MCF 10A (cell line): ENCODE measurements at regions of chr4 and their contacts with region 1.

Region 1: DNA sequence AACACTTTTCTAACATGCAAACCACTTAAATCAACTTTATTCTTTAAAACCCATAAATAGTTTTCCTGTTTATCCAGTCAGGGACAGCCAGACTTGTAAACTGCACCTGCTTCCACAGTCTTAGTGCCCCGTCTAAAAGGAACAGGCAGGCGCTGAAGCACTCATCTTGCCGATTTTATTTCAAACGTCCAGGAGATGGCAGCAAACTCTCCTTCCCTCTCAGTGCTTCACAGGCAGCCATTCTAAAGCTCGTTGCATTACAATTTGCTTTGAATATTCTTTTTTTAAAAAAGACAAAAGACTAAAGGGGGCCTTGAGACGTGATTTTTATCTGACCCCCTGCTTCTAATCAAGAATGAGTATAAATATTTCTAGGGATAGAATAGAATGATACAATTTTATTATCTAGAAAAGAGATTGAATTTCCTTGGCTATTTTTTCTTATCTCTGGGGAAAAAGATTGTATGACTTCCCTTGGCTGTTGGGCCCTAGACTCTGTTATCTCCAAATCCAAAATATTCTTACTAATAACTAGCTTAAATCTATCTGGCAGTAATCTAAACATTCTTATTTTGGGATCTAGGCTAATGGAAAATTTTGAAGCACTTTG is 93.6 kb upstream of the MYOZ2 start:
- DNase-seq: peak; percentile 86
- H3K4me3 Mint-ChIP-seq: no peak overlapping the region
- H3K27ac Mint-ChIP-seq: no peak overlapping the region
- H3K4me1 Mint-ChIP-seq: peaks cover 7% of the 10 kb centered on the region
- H3K27me3 Mint-ChIP-seq: no peaks in the 10 kb centered on the region
- CTCF ChIP-seq: peak; percentile 63

Region 2: DNA sequence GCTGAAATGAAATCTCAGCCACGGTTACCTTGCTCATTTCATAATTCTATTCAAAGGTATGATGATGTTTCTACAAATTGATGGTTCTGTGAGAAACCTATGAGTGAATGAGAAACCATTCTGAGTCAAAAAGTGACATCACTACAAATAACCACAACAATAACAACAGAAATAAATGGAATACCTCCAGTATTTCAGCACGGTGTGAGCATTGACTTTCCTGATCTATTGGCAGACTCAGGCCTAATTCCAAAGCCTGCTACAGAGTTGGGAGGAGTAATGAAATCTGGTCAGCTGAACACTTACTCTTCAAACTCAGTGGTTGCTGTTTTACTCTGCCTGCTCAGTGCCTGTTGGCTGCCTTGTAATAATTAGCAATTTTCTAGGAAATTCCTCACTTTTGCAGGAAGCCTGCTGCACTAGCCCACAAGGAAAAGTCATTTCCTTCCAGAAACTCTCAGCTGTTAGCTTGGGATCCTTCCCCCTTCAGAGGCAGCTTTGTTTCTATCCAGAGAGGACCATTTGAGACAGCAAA is 172.2 kb before region 1 on chr4:
- CTCF ChIA-PET with region 1: no interaction called
- POLR2A ChIA-PET with region 1: no interaction called
- intact Hi-C with region 1: no loop called
- DNase-seq: no peak
- H3K4me3 Mint-ChIP-seq: no peak overlapping the region
- H3K27ac Mint-ChIP-seq: no peak overlapping the region
- H3K4me1 Mint-ChIP-seq: no peaks in the 10 kb centered on the region
- H3K27me3 Mint-ChIP-seq: no peaks in the 10 kb centered on the region
- CTCF ChIP-seq: no peak

Region 3: GRCh38 chr4:118989098-118990080 is 52.7 kb before region 1 on chr4:
- CTCF ChIA-PET with region 1: interaction called, 93 read pairs
- POLR2A ChIA-PET with region 1: interaction called, 19 read pairs
- intact Hi-C with region 1: no loop called
- DNase-seq: peak; percentile 91
- H3K4me3 Mint-ChIP-seq: peak overlapping the region; percentile 23
- H3K27ac Mint-ChIP-seq: peak overlapping the region; percentile 96
- H3K4me1 Mint-ChIP-seq: peaks cover 25% of the 10 kb centered on the region
- H3K27me3 Mint-ChIP-seq: no peaks in the 10 kb centered on the region
- CTCF ChIP-seq: no peak

Region 4: DNA sequence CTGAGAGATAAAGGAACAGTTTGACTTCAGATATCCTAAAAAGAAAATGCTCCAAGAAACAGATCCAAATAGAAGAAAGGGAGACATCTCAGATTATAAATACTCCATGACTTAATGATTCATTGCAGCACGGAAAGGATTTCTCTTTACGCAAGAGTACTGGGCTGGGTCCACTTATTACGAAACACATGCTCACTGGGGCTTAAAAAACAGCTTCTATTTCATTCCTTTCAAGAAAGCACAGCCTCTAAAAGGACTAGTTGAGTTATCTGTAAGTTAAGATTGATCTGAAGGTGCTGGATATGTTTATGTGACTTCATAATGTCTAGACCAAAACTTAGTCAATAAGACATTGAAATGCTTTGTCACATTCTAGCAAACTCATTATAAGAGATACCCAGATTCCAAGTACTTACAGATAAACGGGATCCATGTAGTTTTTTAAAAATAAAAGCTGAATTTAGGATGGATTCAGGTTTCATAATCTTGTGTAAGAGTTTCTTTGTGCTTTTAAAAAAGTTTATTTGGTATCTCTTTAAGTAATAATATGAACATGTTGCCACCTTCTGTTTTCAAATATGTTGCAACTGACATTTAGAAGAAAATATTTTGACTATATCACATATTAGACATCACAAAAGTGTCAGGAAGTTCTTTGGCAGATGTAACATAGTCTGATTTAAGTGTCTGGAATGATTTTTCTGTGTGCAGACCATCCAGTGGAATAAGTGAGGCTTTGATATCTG is 16.0 kb before region 1 on chr4:
- CTCF ChIA-PET with region 1: interaction called, 32 read pairs
- POLR2A ChIA-PET with region 1: interaction called, 19 read pairs
- intact Hi-C with region 1: no loop called
- DNase-seq: peak; percentile 88
- H3K4me3 Mint-ChIP-seq: peak overlapping the region; percentile 62
- H3K27ac Mint-ChIP-seq: peak overlapping the region; percentile 95
- H3K4me1 Mint-ChIP-seq: peaks cover 10% of the 10 kb centered on the region
- H3K27me3 Mint-ChIP-seq: no peaks in the 10 kb centered on the region
- CTCF ChIP-seq: peak; percentile 6

Region 5: GRCh38 chr4:119053245-119053644 is 11.2 kb after region 1 on chr4:
- CTCF ChIA-PET with region 1: interaction called, 10 read pairs
- POLR2A ChIA-PET with region 1: no interaction called
- intact Hi-C with region 1: no loop called
- DNase-seq: no peak
- H3K4me3 Mint-ChIP-seq: no peak overlapping the region
- H3K27ac Mint-ChIP-seq: no peak overlapping the region
- H3K4me1 Mint-ChIP-seq: peaks cover 12% of the 10 kb centered on the region
- H3K27me3 Mint-ChIP-seq: no peaks in the 10 kb centered on the region
- CTCF ChIP-seq: no peak

Region 6: DNA sequence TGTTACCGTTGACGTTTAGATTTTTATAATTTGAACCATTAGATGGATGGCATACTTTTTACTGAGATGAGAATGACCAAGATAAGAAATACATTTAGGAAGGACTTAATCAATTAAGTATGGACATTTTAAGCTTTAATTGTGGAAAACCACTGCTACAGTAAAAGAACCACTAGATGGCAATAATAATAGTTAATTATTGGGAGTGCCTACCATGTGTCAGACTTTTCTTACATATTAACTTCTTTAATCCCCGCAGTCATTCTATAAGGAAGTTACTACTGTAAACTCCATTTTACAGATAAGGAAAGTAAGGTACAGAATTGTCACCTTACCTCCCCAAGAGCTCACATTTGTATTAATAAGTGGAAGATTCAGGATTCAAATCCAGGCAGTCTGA is 45.1 kb after region 1 on chr4:
- CTCF ChIA-PET with region 1: interaction called, 26 read pairs
- POLR2A ChIA-PET with region 1: interaction called, 6 read pairs
- intact Hi-C with region 1: no loop called
- DNase-seq: no peak
- H3K4me3 Mint-ChIP-seq: no peak overlapping the region
- H3K27ac Mint-ChIP-seq: no peak overlapping the region
- H3K4me1 Mint-ChIP-seq: no peaks in the 10 kb centered on the region
- H3K27me3 Mint-ChIP-seq: no peaks in the 10 kb centered on the region
- CTCF ChIP-seq: no peak

Region 7: DNA sequence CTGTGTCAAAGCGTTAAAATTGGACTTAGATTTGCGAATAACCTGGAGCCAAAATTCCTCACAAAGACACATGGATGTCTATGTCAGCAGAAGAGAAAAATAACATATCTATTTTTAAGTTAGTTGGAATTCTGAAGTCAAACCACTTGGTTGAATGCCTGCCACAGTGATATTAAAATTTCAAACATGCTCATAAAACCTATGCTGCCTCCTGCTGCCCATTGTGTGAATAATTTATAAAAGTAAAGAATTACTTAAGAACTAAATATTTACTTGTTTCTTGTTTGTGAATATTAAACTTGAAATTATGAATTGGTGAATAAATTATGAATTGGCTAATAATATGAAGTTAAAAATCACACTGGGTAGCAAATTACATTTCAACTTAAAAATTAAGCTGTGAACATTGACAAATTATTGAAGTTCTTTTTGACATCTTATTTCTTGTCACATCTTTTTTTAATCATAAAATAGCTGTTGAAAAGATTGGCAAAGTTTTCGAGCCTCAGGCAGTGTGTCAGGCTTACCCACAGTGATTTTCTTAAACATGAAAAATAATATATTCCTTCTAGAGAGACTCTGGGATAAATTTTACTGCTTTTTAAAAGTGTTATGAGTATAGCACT is 244.4 kb after region 1 on chr4:
- CTCF ChIA-PET with region 1: interaction called, 39 read pairs
- POLR2A ChIA-PET with region 1: interaction called, 4 read pairs
- intact Hi-C with region 1: loop called (anchors 1 kb)
- DNase-seq: peak; percentile 64
- H3K4me3 Mint-ChIP-seq: no peak overlapping the region
- H3K27ac Mint-ChIP-seq: no peak overlapping the region
- H3K4me1 Mint-ChIP-seq: peaks cover 18% of the 10 kb centered on the region
- H3K27me3 Mint-ChIP-seq: no peaks in the 10 kb centered on the region
- CTCF ChIP-seq: peak; percentile 54

Region 8: GRCh38 chr4:119300101-119300978 is 258.3 kb after region 1 on chr4:
- CTCF ChIA-PET with region 1: interaction called, 13 read pairs
- POLR2A ChIA-PET with region 1: interaction called, 11 read pairs
- intact Hi-C with region 1: no loop called
- DNase-seq: peak; percentile 92
- H3K4me3 Mint-ChIP-seq: peak overlapping the region; percentile 93
- H3K27ac Mint-ChIP-seq: peak overlapping the region; percentile 97
- H3K4me1 Mint-ChIP-seq: peaks cover 12% of the 10 kb centered on the region
- H3K27me3 Mint-ChIP-seq: no peaks in the 10 kb centered on the region
- CTCF ChIP-seq: no peak